ENCODE measurements at regions of chr6 and their contacts with region 1.

Region 1: GRCh38 chr6:42928986-42929820 is at the start of gene CNPY3:
- DNase-seq: peak; percentile 93
- H3K4me3 Mint-ChIP-seq: peak within 1 kb of the TSS; percentile 99
- H3K27ac Mint-ChIP-seq: peak within 1 kb of the TSS; percentile 98
- H3K4me1 Mint-ChIP-seq: peaks cover 38% of the 10 kb centered on the region
- H3K27me3 Mint-ChIP-seq: no peaks in the 10 kb centered on the region
- total RNA-seq, gene CNPY3: 47.2 and 49.2 TPM in 2 replicates

Region 2: DNA sequence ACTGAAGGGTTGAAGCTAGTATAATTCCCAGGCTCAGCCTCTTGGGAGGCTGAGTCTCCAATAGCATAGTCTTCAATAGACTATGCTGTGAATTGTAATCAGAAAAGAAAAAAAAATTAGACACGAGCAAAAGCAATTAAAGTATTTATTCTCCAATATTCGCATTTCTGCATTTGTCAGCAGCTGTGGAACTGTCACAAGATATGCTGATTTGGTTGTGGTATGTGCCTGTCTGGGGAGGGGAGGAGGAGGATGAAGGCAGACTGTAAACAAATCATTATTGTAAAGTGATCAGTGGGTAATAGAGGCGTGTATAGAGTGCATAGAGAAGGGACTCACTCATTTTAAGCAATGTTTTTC is 157.5 kb before region 1 on chr6:
- intact Hi-C with region 1: loop called (anchors 1 kb)
- DNase-seq: no peak
- H3K4me3 Mint-ChIP-seq: peak overlapping the region; percentile 74
- H3K27ac Mint-ChIP-seq: peak overlapping the region; percentile 100
- H3K4me1 Mint-ChIP-seq: peaks cover 55% of the 10 kb centered on the region
- H3K27me3 Mint-ChIP-seq: no peaks in the 10 kb centered on the region

Region 3: GRCh38 chr6:42890311-42891198 is 38.6 kb before region 1 on chr6:
- intact Hi-C with region 1: loop called (anchors 1 kb)
- DNase-seq: peak; percentile 86
- H3K4me3 Mint-ChIP-seq: peak overlapping the region; percentile 84
- H3K27ac Mint-ChIP-seq: peak overlapping the region; percentile 89
- H3K4me1 Mint-ChIP-seq: peaks cover 12% of the 10 kb centered on the region
- H3K27me3 Mint-ChIP-seq: no peaks in the 10 kb centered on the region

Region 4: DNA sequence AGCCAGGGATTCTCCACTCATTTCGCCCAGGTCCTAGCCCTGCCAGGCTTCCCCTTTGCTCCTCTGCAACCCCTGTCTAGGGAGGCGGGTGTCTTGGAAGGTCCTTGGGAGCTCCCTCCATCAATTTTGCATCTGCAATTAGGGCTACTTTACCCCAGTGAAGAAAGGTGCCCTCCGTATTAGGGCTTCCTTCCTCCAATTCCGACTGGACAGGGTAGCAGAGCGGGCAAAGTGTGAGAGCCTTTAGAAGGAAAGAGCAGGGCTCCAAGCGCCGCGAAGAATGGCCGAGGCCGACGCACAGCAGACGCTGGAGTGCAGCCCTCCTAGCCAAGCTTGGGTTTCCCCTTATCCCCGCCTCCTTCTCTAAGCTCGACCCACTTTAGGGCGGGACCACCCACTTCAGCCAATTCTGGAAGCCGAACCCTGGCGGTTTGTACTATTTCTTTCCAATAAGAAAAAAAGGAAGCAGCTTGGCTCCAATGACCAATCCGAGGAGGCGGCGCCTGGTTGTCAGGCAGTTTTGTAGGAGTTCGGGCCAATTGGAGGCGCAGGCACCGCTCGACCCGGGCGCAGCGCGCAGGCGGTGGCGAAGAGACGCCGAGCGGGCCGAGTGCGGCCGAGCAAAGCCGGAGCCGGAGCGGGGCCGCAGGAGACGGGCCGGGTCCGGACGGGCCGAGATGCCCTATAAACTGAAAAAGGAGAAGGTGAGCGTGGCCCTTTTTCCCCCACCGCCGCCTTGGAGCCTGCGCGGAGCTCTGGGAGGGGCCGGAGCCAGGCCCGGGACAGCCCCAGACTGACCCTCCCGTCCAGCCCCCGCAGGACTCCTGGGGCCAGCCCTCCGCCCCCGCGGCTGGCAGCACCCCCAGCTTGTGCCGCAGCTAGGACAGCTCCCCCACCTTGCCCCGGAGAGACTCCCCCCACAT is 55.1 kb after region 1 on chr6 and contains the start of gene PPP2R5D:
- intact Hi-C with region 1: loop called (anchors 1 kb)
- DNase-seq: peak; percentile 97
- H3K4me3 Mint-ChIP-seq: peak within 1 kb of the TSS; percentile 92
- H3K27ac Mint-ChIP-seq: peak within 1 kb of the TSS; percentile 94
- H3K4me1 Mint-ChIP-seq: peaks cover 57% of the 10 kb centered on the region
- H3K27me3 Mint-ChIP-seq: no peaks in the 10 kb centered on the region
- total RNA-seq, gene PPP2R5D: 52.1 and 53.4 TPM in 2 replicates

Region 5: DNA sequence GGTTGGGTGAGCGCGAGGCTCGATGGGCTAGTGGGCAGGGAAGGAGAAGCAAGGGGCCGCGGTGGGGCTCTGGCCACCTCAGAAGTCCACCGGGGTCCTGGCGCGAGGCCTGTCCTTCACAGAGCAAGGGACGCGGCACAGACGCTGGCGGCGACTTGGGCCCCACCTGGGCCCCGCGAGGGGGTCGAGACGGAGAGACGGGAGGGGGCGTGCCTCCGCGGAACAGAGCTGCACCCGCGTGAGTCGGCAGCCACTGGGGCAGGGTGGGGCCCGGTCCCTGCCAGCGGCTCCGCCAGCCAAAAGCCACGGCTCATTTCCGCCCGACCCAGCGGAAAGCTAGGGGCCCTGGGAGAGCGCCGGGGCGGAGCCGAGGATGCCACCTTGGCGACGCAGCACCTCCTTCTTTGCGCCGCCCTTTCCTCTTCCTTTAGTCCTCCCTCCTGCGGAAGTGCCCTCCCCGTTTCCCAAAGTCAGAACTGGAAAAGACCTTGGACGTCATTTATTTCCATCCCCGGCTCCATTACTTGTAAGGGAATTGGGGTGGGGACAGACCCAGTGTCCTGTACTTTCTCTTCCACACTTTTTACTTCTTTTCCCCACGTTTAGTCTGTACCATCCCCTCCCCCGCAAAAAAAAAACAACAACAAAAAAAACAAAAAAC is 124.5 kb after region 1 on chr6 and contains the start of gene CUL7:
- intact Hi-C with region 1: loop called (anchors 1 kb)
- DNase-seq: peak; percentile 89
- H3K4me3 Mint-ChIP-seq: peak within 1 kb of the TSS; percentile 99
- H3K27ac Mint-ChIP-seq: peak within 1 kb of the TSS; percentile 98
- H3K4me1 Mint-ChIP-seq: peaks cover 53% of the 10 kb centered on the region
- H3K27me3 Mint-ChIP-seq: no peaks in the 10 kb centered on the region
- total RNA-seq, gene CUL7: 20.1 and 23.2 TPM in 2 replicates